ENCODE measurements at regions of chr9 and their contacts with region 1.

Region 1: GRCh38 chr9:108924466-108924865 is 9.5 kb downstream of the ELP1 start:
- DNase-seq: no peak

Region 2: GRCh38 chr9:108468402-108468801 is 456.1 kb before region 1 on chr9:
- intact Hi-C with region 1: no loop called
- DNase-seq: no peak

Region 3: GRCh38 chr9:109005678-109006077 is 81.2 kb after region 1 on chr9:
- intact Hi-C with region 1: loop called in 1 of 2 experiments (anchors 2 kb)
- DNase-seq: no peak

Region 4: DNA sequence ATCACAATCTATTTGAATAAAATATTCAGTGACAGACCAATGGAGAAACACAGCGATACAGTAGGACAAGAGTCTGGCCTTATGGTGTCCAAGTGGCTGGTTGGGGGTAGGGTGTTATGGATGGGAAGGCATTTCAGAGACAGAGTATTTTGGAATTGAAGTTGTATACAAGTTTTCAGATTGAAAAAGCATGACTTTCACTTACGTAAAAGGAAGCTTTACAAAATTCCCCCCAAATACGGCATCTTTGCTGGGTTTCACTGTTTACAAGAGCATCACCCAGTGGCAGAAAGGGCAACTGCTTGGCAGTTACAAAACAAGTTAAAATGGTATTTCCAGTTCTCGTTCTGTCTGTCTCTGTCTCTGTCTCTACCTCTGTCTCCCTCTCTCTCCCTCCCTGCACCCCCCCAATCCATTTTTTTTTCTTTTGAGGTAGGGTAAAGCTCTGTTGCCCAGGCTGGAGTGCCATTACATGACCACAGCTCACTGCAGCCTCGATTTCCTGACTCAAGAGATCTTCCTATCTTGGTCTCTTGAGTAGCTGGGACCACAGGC is 487.4 kb after region 1 on chr9:
- intact Hi-C with region 1: loop called in 1 of 2 experiments (anchors 10 kb)
- DNase-seq: no peak

Measured in posterior vena cava (tissue), 2 donors.